PC-3 (cell line): ENCODE measurements at regions of chr17 and their contacts with region 1.

Region 1: DNA sequence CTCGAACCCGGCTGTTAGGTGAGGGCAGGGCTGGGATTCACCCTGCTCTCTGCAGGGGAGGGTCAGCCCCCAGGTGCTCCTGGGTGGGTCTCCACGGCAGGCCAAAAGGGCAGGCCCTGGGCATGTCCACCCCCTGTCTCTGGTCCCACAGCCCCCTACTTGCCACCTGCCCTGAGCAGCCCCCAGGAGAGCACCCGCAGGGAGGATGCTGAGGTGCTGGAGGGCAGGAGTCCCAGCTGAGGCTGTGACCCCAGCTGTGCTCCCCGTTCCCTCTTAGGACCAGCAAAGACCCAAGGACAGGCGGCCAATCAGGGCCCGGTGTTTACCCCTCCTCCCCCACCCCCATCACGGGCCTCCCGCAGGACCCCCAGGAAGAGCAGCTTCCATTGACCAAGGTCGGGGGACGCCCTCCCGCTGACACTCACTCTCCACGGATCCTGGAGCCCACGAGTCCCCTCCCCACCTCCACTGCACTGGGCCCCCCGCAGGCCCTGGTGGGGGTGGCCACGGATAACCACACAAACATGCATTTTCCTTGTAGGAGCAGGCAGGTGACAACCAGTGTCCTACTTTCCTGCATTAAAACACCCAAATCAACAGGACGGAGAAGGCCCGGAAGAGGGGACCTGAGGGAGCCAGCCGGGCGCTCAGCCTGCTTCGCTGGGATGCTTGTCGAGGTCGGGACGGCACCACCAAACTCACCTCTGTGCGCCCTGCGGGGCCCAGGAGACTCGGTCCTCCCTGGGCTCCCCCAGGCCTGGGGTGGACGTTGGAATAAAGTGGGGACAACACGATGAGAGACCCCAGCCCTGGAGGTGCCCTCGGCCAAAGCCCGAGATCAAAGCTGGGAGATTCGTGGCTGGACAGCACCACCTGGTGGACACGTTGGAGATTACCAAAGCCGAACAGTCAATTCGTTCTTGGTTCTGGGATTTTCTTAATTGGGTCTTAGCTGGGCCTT is 22.5 kb upstream of the ENPP7 start:
- DNase-seq: peak; percentile 73
- ATAC-seq: peak; percentile 66
- H3K4me3 ChIP-seq: no peak overlapping the region; the same call in 1 of the 2 replicates
- H3K27ac ChIP-seq: no peak overlapping the region
- H3K4me1 ChIP-seq: no peaks in the 10 kb centered on the region
- H3K27me3 ChIP-seq: no peaks in the 10 kb centered on the region
- CTCF ChIP-seq: peak; percentile 85

Region 2: DNA sequence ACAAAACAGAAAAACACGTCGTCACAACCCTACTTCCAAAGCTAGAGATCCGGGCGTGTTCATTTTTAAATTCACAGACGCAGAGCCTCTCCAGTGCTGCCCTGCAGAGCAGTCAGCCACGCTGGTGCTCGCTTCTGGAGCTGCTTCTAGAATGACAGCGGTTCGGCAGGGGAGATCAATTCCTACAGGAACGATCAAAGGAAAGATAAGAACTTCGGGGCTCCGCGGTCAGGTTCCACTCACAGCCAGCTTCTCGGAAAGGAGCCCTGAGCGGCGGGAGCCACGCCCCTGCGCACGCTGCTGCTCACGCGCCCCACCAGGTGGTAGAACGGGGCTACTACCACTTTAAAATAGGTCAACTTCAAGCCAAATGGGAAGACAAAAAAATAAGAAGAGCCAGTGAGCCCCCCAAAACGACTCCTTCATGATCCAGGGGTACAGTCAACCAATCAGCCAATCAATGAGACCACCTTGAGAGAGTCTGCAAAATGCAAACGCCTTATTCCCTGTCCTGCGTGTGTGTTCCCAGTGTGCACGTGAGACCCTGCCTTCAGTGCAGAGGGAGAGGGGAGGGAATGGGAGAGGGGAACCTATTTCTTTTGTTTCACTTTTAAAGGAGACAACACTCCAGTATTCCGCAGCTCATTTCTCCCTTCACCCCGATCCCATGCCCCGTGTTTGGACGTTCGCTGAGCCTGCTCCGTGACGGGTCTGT is 307.1 kb before region 1 on chr17:
- CTCF ChIA-PET with region 1: interaction called, 8 read pairs
- POLR2A ChIA-PET with region 1: no interaction called
- intact Hi-C with region 1: loop called (anchors 1 kb)
- DNase-seq: peak; percentile 76
- ATAC-seq: peak; percentile 86
- H3K4me3 ChIP-seq: peak overlapping the region; percentile 54
- H3K27ac ChIP-seq: no peak overlapping the region
- H3K4me1 ChIP-seq: peaks cover 5% of the 10 kb centered on the region; the same call in 1 of the 2 replicates
- H3K27me3 ChIP-seq: peaks cover 81% of the 10 kb centered on the region
- CTCF ChIP-seq: peak; percentile 92

Region 3: DNA sequence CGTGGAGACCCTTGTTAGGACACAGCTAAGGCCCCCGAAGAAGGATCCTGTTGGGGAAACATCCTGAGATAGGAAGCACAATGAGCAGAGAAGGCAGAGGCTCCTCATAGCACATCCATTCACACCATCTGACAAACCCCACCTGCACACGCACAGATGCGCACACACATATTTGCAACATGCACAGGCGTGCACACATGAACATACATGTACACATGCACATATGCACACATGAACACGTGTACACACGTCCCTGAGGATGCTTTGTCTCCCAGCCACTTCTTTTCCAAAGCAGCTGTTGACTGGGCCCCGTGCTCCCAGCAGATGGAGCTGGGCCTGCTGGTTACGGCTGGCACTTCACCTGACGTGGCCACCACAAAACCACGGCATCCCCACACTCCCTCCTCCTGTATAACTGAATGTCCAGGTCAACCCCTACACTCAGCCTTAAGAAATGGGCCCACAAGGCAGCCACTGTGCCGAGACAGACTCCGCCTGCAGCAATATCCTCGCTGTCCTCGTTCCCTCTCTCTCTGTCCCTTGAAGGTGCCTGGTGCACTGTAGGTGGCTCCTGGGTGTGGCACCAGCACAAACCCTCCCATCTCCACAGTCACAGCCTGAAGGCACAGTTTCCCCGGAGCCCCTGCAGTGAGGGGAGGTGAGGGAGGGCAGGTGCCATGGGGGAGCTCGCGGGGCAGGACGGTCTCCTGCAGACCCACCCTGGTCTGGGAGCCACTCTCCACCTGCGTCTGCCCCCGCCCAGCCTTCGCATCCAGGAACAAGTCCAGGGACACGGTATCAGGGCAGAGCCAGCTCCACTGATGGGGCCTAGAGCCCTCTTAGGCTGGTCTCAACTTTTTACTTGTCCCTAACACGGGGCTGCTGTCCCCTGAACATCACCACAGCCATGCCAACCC is 280.3 kb before region 1 on chr17:
- CTCF ChIA-PET with region 1: no interaction called
- POLR2A ChIA-PET with region 1: no interaction called
- intact Hi-C with region 1: loop called (anchors 2 kb)
- DNase-seq: peak; percentile 18
- ATAC-seq: peak; percentile 53
- H3K4me3 ChIP-seq: no peak overlapping the region
- H3K27ac ChIP-seq: no peak overlapping the region
- H3K4me1 ChIP-seq: no peaks in the 10 kb centered on the region
- H3K27me3 ChIP-seq: peaks cover 97% of the 10 kb centered on the region
- CTCF ChIP-seq: 0 out of 2 replicates have a peak, but pooled peaks have one; percentile 21

Region 4: GRCh38 chr17:79752175-79752574 is 44.0 kb after region 1 on chr17:
- CTCF ChIA-PET with region 1: no interaction called
- POLR2A ChIA-PET with region 1: no interaction called
- intact Hi-C with region 1: no loop called
- DNase-seq: peak; percentile 27
- ATAC-seq: no peak
- H3K4me3 ChIP-seq: no peak overlapping the region
- H3K27ac ChIP-seq: peak overlapping the region; percentile 28
- H3K4me1 ChIP-seq: peaks cover 33% of the 10 kb centered on the region
- H3K27me3 ChIP-seq: 0 out of 2 replicates have a peak, but pooled peaks cover 3% of the 10 kb centered on the region
- CTCF ChIP-seq: no peak